HepG2 (cell line): ENCODE measurements at regions of chr1 and their contacts with region 1.

Region 1: DNA sequence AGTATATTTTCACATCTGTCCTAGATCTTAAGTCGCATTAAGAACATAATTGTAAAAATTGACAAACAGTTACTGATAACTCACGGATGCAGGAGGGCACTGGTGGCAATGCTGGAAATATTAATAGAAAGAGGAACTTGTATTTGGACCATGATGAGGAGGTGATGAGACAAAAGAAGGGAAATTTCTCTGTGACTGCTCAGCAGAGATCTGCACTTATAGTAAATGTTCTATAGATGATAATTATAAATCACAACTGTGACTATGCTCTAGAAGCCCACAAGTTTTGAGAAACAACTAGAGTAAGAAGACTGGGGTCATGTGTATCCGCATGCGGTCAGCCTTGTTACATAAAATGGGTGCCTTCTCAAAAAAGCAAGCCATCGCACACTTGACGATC is 8.7 kb upstream of the DUSP12 start:
- DNase-seq: no peak
- ATAC-seq: no peak
- H3K4me3 ChIP-seq: no peak overlapping the region
- H3K27ac ChIP-seq: no peak overlapping the region
- H3K4me1 ChIP-seq: no peaks in the 10 kb centered on the region
- H3K27me3 ChIP-seq: no peaks in the 10 kb centered on the region; a peak in 2 of 5 replicates
- CTCF ChIP-seq: no peak
- EP300 ChIP-seq: no peak
- POLR2A ChIP-seq: no peak
- RAD21 ChIP-seq: no peak

Region 2: DNA sequence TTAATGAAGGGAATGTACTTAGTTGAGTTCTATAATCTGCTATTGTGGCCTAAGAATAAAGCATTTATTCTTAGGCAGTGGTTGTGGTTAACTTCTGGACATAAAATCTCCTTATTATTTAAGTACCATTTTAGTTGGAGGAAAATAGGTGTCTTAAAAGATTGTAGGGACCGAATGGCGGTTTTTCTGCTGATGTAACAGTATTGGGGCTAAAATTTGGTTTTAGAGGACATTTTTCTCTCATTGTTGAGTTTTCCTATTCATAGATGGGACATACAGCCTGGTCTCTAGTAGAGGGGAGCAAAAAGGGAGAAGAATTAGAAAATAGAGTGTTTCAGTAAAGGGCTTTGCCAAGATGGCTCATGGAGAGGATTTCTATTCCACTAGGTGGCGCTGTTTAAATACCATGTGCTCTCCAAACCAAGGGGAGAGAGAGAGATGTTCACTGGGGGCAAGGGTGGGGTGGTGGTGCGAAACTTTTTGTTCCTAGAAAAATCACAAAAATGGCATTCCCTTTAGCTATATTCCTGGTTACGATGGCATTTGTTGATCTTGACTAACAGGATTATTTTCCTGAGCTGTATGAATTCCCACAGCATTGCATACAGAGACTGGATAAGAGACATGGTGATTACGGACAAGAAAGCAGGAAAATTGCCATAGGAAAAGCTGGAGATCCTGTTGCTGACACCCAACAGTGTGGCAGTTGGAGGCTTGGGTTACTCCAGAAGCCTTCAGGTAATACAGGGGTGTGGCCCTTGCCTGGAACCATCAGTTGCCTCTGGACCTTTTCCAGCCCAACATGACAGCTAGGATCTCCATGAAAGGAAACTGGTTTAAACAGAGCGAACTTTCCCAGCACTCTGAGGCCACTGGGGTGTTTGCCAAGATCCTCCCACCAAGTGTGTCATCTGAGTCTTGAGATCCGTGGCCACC is 253.8 kb before region 1 on chr1:
- CTCF ChIA-PET with region 1: interaction called, 13 read pairs
- POLR2A ChIA-PET with region 1: no interaction called
- in situ Hi-C with region 1: no loop called
- intact Hi-C with region 1: loop called (anchors 1 kb)
- DNase-seq: peak; percentile 32
- ATAC-seq: peak; percentile 54; the same call in 2 of the 3 replicates
- H3K4me3 ChIP-seq: no peak overlapping the region
- H3K27ac ChIP-seq: no peak overlapping the region
- H3K4me1 ChIP-seq: no peaks in the 10 kb centered on the region
- H3K27me3 ChIP-seq: peaks cover 1 to 21% of the 10 kb centered on the region in 2 experiments; a peak in 3 of 5 replicates
- CTCF ChIP-seq: peak; percentile 64
- EP300 ChIP-seq: no peak
- POLR2A ChIP-seq: no peak
- RAD21 ChIP-seq: 0 out of 2 replicates have a peak, but pooled peaks have one; percentile 25